Sciatic nerve (tissue), 2 donors: ENCODE measurements at regions of chr18 and their contacts with region 1.

Region 1: DNA sequence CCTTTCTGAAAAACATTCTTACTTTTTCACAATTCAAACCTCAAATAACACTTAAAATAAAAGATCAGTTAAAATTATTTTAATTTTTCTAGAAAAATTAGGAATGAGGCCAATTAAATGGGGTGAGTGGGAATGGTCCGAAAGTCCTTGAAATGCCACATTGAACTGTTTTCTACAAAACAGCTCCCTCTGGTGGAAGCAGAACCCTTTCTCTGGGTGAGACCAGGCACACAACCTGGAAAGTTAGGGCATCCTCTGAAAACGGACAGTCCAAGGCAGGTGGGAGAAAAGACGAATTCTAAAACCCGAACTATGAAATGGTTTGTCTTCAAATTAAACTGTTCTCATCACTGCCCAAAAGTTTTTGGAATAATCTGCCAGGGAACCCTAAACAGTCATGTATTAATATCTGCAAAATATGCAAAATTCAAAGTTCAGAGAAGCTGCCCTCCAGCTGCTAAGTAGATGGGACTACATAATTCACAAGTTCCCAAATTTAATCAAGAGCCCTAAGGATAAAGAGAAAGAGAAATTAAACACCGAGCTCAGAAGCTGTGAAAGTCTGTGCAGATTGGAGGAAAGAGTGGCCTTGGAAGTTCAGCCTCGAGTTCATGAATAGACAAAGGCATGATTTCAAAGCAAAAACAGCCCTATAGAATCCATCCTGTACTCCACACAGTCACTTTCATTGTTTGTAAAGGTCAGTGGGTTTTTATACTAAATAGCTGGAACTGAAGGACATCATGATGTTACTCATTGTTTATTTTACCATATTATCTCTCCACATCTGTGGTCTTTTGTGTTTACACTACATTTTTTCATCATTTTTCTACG is 108.3 kb downstream of the PIEZO2 start:
- DNase-seq: peak; percentile 66
- ATAC-seq: peak; percentile 88

Region 2: DNA sequence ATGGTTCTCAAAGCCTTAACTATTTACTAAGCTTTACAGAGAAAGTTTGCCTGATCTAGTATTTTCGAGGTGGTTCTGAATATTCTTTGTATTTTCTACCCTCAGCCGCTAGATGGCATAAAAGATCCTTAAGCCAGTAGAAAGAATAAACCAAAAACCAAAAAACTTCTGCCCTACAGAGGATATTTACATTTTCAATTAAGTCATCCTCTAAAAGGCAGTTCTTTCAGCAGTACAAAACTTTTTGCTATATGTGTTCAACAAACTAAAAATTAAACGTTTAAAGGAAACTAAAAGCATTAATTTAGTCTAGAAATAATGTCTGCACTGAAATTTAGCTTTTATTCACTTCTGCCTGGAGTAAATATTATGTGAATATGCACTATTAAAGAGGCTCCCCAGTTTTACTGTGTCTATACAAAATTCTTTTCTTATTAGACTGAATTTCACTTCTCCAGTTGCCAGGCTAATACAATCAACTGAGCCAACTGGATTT is 189.2 kb before region 1 on chr18:
- intact Hi-C with region 1: loop called (anchors 10 kb)
- DNase-seq: no peak
- ATAC-seq: peak; percentile 34

Region 3: DNA sequence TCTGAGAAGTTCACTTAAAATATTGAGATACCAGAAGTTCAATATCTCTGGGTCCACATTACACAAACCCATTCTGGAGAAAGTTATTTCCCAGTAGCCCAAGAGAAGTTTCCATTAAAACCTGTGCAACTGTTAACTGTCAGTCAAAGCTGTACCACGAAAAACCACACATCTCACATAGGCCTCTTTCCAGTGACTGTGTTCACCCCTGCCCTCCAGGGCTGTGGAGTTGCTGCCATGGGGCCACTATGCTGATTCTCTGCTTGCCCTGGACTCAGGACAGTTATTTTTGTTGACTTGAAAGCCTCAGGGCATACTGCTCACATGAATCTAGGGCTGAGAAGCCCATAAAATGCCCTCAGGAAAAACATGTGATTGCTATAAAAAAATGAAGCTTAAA is 45.5 kb before region 1 on chr18:
- intact Hi-C with region 1: no loop called
- DNase-seq: no peak
- ATAC-seq: no peak

Region 4: GRCh38 chr18:11500153-11501122 is 459.4 kb after region 1 on chr18:
- intact Hi-C with region 1: no loop called
- DNase-seq: no peak
- ATAC-seq: peak; percentile 77